H1 (cell line): ENCODE measurements at regions of chr19 and their contacts with region 1.

Region 1: DNA sequence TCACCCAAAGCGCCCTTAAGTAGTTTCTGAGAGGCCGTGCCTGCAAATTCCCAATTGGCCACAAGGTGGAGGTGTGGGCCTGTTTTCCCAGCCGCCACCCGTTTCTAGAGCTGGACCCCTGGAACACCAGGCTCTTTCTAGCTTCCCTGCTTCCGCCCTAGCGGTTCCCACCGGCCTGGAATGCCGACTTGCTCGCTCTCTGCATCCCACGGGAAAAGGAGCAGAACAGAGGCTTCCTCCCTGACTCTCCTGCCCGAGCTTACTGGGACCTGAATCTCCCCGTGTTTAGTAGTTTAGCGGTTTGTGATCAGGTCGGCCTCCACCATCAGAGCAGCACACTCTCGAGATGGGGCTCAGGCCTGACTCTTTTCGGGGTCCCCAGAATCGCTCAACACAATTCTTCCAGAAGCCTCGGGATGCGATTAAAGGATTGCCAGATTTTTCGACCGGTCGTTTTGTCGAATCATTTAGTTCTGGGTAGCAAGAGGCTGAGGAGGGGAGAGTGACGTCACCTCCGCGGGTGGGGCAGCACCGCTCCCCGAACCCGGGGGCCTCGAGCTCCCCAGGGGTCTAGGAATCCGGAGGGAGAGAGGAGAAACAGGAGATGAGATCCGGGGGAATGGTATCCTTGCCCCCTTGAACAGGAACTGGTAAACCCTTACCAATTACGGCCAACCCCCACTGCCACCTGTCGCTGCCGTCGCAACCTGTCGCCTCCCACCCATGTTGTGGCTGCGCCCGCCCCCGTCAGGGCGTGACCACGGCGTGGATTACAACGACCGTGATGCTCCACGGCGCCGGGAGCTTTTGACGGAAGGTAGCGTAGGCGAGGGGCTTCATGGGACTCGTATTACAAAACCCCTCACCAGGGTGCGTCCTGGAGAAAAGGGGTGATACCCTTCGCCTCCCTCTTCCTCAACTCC is 8.0 kb downstream of the NAPSA start:
- DNase-seq: peak; percentile 56 to 95
- H3K4me3 ChIP-seq: peak overlapping the region in 1 of 4 experiments; percentile 16; a peak in 1 of 8 replicates
- H3K27ac ChIP-seq: no peak overlapping the region
- H3K4me1 ChIP-seq: peaks cover 0 to 2% (median 0%) of the 10 kb centered on the region in 4 experiments; a peak in 2 of 7 replicates
- H3K27me3 ChIP-seq: no peaks in the 10 kb centered on the region; a peak in 2 of 7 replicates
- CTCF ChIP-seq: peak; percentile 71 to 87 (median 82)
- EP300 ChIP-seq: no peak
- POLR2A ChIP-seq: no peak
- RAD21 ChIP-seq: peak; percentile 77 to 84

Region 2: DNA sequence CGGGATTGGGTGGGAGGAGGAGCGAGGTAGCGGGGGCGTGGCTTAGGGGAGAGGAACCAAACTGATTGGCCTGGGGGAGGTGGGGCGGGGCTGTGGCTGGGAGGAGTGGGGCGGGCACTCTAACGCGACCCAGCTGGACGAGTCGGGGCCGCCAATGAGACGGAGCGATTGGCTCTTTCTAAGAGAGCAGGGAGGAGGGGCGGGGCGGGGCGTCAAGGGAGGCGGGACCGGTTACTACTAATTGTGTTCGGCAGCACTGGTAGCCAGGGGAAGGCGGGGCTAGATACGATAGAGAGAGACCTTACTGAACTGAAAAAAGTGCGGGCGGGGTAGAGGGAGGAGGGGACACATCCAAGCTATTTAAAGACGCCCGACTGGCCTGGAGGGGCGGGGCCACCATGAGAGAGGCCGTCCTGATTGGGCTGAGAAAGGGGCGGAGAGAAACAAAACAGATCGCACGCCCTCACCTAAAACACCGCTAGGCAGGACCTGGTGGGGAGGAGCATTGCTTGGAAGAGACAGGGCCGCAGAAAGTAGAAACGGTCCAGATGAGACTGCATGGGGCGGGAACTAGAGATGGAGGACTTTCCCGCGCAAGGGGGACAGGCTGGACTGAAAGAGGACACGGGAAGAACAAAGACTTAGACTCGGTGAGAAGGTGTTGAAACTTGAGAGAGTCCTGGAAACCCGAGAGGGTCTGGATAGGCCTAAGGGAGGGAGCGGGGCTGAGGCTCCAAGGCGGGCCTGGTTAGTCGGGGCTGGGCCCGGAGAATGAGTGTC is 28.1 kb before region 1 on chr19 and contains the start of gene KCNC3:
- CTCF ChIA-PET with region 1: interaction called, 4 read pairs
- POLR2A ChIA-PET with region 1: interaction called, 11 read pairs
- DNase-seq: peak; percentile 98 to 99
- H3K4me3 ChIP-seq: peak within 1 kb of the TSS; percentile 74 to 96 (median 84)
- H3K27ac ChIP-seq: 0 out of 2 replicates have a peak within 1 kb of the TSS, but pooled peaks have one; percentile 12
- H3K4me1 ChIP-seq: peaks cover 2 to 33% (median 15%) of the 10 kb centered on the region in 4 experiments
- H3K27me3 ChIP-seq: peaks cover 5 to 15% (median 12%) of the 10 kb centered on the region in 4 experiments; a peak in 6 of 7 replicates
- CTCF ChIP-seq: no peak
- EP300 ChIP-seq: no peak
- POLR2A ChIP-seq: peak; percentile 56 to 74; a peak in 2 of 3 replicates
- RAD21 ChIP-seq: no peak
- total RNA-seq, gene KCNC3: 7.2 and 8.5 TPM in 2 replicates

Region 3: DNA sequence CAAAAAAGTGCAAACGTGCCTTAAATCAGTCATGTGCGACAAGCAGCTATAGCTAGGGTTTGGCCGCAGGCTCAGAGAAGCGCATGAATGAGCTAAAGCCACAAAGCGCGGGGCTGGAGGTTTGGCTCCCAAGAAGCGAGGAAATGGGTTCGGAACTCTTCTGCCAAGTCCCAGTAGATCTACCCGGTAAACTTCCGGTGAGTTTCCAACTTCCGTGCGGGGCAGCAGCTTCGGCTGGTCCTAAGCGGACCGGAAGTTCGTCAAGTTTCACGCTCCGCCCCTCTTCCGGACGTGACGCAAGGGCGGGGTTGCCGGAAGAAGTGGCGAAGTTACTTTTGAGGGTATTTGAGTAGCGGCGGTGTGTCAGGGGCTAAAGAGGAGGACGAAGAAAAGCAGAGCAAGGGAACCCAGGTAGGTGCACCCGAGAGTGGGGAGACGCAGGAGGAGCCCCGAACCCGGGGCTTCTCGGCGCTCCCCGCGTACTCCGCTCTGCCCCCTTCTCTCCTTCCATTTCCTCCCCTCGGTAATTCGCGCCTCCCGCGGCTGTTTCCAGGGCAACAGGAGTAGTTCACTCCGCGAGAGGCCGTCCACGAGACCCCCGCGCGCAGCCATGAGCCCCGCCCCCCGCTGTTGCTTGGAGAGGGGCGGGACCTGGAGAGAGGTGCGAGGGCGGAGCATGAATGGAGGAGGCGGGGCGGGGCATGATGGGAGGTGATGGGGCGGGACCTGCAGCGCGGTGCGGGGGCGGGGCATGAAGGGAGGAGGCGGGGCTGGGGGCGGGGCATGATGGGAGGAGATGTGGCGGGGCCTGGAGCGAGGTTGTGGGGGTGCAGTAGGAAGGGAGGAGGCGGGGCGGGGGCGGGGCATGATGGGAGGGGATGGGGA is 19.0 kb after region 1 on chr19 and contains the start of gene NR1H2:
- CTCF ChIA-PET with region 1: interaction called, 10 read pairs
- POLR2A ChIA-PET with region 1: interaction called, 4 read pairs
- DNase-seq: peak; percentile 94 to 95
- H3K4me3 ChIP-seq: peak within 1 kb of the TSS; percentile 82 to 100 (median 86)
- H3K27ac ChIP-seq: peak within 1 kb of the TSS; percentile 98
- H3K4me1 ChIP-seq: peaks cover 0 to 4% (median 1%) of the 10 kb centered on the region in 4 experiments; a peak in 3 of 7 replicates
- H3K27me3 ChIP-seq: no peaks in the 10 kb centered on the region
- CTCF ChIP-seq: no peak; a peak in 1 of 4 replicates
- EP300 ChIP-seq: peak in 1 of 2 experiments; percentile 68; a peak in 1 of 3 replicates
- POLR2A ChIP-seq: peak in 1 of 2 experiments; percentile 68; a peak in 1 of 3 replicates
- RAD21 ChIP-seq: no peak; a peak in 1 of 4 replicates
- total RNA-seq, gene NR1H2: 40.3 and 41.4 TPM in 2 replicates

Region 4: DNA sequence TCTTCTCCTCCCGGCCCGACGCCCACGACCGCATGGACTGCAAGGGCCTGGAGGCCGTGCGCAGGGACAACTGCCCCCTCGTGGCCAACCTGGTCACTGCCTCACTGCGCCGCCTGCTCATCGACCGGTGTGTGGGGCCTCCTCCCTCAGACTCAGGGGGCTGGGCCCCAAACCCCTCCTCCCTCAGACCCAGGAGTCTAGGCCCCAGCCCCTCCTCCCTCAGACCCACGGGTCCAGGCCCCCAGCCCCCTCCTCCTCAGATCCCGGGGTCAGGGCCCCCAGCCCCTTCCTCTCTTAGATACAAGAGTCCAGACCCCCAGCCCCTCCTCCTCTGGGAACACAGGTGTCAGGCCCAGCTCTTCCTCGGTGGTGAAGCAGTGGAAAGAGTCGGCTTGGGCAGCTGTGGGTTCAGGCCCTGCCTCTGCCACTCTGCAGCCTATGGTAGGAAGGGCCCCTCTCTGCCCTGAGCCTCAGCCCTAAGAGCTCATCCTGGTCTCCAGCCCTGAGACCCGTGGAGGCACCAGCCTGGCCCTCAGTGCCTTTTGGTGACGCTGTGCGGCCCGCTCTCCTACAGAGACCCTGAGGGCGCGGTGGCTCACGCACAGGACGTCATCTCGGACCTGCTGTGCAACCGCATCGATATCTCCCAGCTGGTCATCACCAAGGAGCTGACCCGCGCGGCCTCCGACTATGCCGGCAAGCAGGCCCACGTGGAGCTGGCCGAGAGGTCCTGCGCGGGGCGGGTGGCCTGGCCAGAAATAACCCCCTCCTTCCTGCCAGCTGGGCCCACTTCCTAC is 57.6 kb after region 1 on chr19:
- CTCF ChIA-PET with region 1: interaction called, 13 read pairs
- POLR2A ChIA-PET with region 1: interaction called, 3 read pairs
- DNase-seq: peak; percentile 79 to 98
- H3K4me3 ChIP-seq: no peak overlapping the region
- H3K27ac ChIP-seq: no peak overlapping the region; the same call in 1 of the 2 replicates
- H3K4me1 ChIP-seq: peaks cover 0 to 20% (median 12%) of the 10 kb centered on the region in 4 experiments; a peak in 6 of 7 replicates
- H3K27me3 ChIP-seq: peaks cover 0 to 2% (median 0%) of the 10 kb centered on the region in 4 experiments; a peak in 1 of 7 replicates
- CTCF ChIP-seq: peak; percentile 94 to 99 (median 95)
- EP300 ChIP-seq: no peak
- POLR2A ChIP-seq: no peak
- RAD21 ChIP-seq: peak; percentile 65 to 76